ENCODE measurements at regions of chr21 and their contacts with region 1.

Region 1: DNA sequence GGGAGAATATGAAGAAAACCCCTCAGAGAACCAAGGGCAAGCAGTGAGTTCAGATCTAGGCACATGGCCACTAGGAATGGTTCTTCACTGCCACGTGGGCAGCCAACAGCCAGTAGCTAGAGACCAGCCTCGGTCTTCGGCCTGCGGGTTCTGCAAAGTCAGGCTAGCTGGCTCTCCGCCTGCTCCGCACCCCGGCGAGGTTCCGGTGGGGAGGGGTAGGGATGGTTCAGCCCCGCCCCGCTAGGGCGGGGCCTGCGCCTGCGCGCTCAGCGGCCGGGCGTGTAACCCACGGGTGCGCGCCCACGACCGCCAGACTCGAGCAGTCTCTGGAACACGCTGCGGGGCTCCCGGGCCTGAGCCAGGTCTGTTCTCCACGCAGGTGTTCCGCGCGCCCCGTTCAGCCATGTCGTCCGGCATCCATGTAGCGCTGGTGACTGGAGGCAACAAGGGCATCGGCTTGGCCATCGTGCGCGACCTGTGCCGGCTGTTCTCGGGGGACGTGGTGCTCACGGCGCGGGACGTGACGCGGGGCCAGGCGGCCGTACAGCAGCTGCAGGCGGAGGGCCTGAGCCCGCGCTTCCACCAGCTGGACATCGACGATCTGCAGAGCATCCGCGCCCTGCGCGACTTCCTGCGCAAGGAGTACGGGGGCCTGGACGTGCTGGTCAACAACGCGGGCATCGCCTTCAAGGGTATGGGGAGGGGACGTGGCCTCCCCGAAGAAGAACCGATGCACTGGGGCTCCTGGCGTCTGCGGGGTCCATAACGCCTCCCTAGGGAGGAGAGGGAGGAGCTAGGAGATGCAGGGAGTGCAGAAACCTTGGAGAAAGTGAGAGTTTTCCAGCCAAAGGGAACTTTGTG is at the start of gene CBR1:
- DNase-seq: peak; percentile 96
- ATAC-seq: peak; percentile 99
- total RNA-seq, gene CBR1: 25.3 to 34.8 TPM

Region 2: DNA sequence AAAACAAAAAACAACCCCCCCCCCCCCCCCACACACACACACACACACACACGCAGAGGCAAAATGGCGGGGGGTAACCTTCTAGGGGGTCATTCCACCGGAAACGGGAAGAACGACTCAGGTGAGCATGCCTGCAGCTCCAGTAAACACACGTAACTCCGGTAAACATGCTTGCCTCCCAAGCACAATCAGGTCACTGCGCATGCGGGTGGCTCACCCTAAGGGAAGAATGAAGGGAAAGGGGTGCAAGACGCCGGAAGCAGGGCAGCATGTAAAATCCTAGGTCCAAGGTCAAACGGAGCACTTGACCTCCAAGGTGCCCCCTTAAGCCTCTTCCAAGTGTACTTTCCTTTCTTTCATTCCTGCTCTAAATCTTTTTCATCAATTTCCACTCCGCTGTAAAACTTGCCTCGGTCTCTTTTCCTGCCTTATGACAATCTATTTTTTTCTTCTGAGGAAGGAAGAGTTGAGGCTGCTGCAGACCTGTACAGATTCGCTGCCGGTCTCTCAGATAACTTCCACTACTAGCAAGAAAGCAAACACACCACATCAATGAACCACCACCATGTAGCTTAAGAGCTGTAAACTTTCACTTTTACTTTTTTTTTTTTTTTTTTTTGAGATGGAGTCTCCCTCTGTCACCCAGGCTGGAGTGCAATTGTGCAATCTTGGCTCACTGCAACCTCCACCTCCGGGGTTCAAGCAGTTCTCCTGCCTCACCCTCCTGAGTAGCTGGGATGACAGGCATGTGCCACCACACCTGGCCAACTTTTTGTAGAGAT is 43.9 kb after region 1 on chr21:
- intact Hi-C with region 1: loop called in 1 of 2 experiments (anchors 5 kb)
- DNase-seq: no peak
- ATAC-seq: no peak

Measured in left cardiac atrium (tissue), 4 donors.